GM12878 (cell line): ENCODE measurements at regions of chr14 and their contacts with region 1.

Region 1: DNA sequence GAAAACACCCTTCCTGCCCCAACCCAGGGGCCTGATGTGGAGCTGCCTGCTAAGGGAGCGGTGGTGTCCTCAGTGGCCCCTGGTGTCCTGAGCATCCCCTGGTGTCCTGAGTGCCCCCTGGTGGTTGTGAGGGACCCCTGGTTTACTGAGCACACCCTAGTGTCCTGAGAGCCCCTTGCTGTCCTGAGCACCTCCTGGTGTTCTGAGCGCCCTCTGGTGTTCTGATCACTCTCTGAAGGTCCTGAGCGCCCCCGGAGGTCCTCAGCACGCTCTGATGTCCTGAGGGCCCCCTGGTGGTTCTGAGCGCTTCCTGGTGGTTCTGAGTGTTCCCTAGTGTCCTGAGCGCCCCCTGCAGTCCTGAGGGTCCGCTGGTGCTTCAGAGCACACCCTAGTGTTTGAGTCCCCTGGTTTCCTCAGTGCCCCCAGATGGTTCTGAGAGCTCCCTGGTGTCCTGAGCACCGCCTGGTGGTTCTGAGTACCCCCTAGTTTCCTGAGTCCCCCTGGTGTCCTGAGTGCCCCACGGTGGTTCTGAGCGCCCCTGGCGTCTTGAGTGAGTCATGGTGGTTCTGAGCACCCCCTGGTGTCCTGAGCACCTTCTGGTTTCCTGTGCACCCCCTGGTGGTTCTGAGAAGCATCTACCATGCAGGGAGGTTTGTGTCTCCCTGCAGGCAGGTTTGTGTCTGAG is 1004.2 kb downstream of the TMEM121 start:
- DNase-seq: peak; percentile 51
- ATAC-seq: peak; percentile 97
- H3K4me3 ChIP-seq: no peak overlapping the region
- H3K27ac ChIP-seq: no peak overlapping the region
- H3K4me1 ChIP-seq: peaks cover 8% of the 10 kb centered on the region
- H3K27me3 ChIP-seq: no peaks in the 10 kb centered on the region
- CTCF ChIP-seq: peak; percentile 79 to 91 (median 88)
- EP300 ChIP-seq: no peak
- POLR2A ChIP-seq: no peak
- RAD21 ChIP-seq: peak; percentile 51; the same call in 1 of the 2 replicates

Region 2: DNA sequence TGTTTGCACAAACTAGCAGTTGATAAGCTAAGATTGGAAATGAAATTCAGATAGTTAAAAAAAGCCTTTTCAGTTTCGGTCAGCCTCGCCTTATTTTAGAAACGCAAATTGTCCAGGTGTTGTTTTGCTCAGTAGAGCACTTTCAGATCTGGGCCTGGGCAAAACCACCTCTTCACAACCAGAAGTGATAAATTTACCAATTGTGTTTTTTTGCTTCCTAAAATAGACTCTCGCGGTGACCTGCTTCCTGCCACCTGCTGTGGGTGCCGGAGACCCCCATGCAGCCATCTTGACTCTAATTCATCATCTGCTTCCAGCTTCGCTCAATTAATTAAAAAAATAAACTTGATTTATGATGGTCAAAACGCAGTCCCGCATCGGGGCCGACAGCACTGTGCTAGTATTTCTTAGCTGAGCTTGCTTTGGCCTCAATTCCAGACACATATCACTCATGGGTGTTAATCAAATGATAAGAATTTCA is 668.5 kb before region 1 on chr14:
- CTCF ChIA-PET with region 1: no interaction called
- POLR2A ChIA-PET with region 1: no interaction called
- RAD21 ChIA-PET with region 1: no interaction called
- SMC1A ChIA-PET with region 1: no interaction called
- in situ Hi-C with region 1: loop called (anchors 25 kb)
- intact Hi-C with region 1: no loop called
- DNase-seq: peak; percentile 88
- ATAC-seq: peak; percentile 41
- H3K4me3 ChIP-seq: peak overlapping the region; percentile 84
- H3K27ac ChIP-seq: peak overlapping the region; percentile 98
- H3K4me1 ChIP-seq: no peaks in the 10 kb centered on the region
- H3K27me3 ChIP-seq: no peaks in the 10 kb centered on the region
- CTCF ChIP-seq: no peak
- EP300 ChIP-seq: peak; percentile 99 to 100
- POLR2A ChIP-seq: no peak
- RAD21 ChIP-seq: no peak

Region 3: GRCh38 chr14:106442857-106443256 is 87.7 kb before region 1 on chr14:
- CTCF ChIA-PET with region 1: interaction called, 82 read pairs
- POLR2A ChIA-PET with region 1: no interaction called
- RAD21 ChIA-PET with region 1: no interaction called
- SMC1A ChIA-PET with region 1: interaction called, 19 read pairs
- in situ Hi-C with region 1: no loop called
- intact Hi-C with region 1: loop called (anchors 5 kb)
- DNase-seq: no peak
- ATAC-seq: peak; percentile 100
- H3K4me3 ChIP-seq: no peak overlapping the region
- H3K27ac ChIP-seq: no peak overlapping the region
- H3K4me1 ChIP-seq: no peaks in the 10 kb centered on the region
- H3K27me3 ChIP-seq: peaks cover 0 to 6% of the 10 kb centered on the region in 2 experiments; a peak in 2 of 4 replicates
- CTCF ChIP-seq: peak; percentile 56 to 76 (median 57)
- EP300 ChIP-seq: no peak
- POLR2A ChIP-seq: no peak
- RAD21 ChIP-seq: peak; percentile 31; the same call in 1 of the 2 replicates

Region 4: GRCh38 chr14:106491851-106492250 is 38.7 kb before region 1 on chr14:
- CTCF ChIA-PET with region 1: interaction called, 25 read pairs
- POLR2A ChIA-PET with region 1: no interaction called
- RAD21 ChIA-PET with region 1: interaction called, 3 read pairs
- SMC1A ChIA-PET with region 1: interaction called, 15 read pairs
- in situ Hi-C with region 1: no loop called
- intact Hi-C with region 1: no loop called
- DNase-seq: no peak
- ATAC-seq: no peak
- H3K4me3 ChIP-seq: no peak overlapping the region
- H3K27ac ChIP-seq: no peak overlapping the region
- H3K4me1 ChIP-seq: no peaks in the 10 kb centered on the region
- H3K27me3 ChIP-seq: peaks cover 0 to 4% of the 10 kb centered on the region in 2 experiments; a peak in 1 of 4 replicates
- CTCF ChIP-seq: peak; percentile 30 to 64 (median 58); a peak in 5 of 6 replicates
- EP300 ChIP-seq: no peak
- POLR2A ChIP-seq: no peak
- RAD21 ChIP-seq: peak; percentile 68

Region 5: GRCh38 chr14:106518054-106518943 is 12.3 kb before region 1 on chr14:
- CTCF ChIA-PET with region 1: interaction called, 132 read pairs
- POLR2A ChIA-PET with region 1: interaction called, 3 read pairs
- RAD21 ChIA-PET with region 1: interaction called, 25 read pairs
- SMC1A ChIA-PET with region 1: interaction called, 18 read pairs
- in situ Hi-C with region 1: no loop called
- intact Hi-C with region 1: no loop called
- DNase-seq: no peak
- ATAC-seq: peak; percentile 84
- H3K4me3 ChIP-seq: no peak overlapping the region
- H3K27ac ChIP-seq: no peak overlapping the region
- H3K4me1 ChIP-seq: peaks cover 10% of the 10 kb centered on the region
- H3K27me3 ChIP-seq: no peaks in the 10 kb centered on the region; a peak in 1 of 4 replicates
- CTCF ChIP-seq: peak; percentile 63 to 76 (median 75)
- EP300 ChIP-seq: no peak
- POLR2A ChIP-seq: no peak
- RAD21 ChIP-seq: peak; percentile 78

Region 6: DNA sequence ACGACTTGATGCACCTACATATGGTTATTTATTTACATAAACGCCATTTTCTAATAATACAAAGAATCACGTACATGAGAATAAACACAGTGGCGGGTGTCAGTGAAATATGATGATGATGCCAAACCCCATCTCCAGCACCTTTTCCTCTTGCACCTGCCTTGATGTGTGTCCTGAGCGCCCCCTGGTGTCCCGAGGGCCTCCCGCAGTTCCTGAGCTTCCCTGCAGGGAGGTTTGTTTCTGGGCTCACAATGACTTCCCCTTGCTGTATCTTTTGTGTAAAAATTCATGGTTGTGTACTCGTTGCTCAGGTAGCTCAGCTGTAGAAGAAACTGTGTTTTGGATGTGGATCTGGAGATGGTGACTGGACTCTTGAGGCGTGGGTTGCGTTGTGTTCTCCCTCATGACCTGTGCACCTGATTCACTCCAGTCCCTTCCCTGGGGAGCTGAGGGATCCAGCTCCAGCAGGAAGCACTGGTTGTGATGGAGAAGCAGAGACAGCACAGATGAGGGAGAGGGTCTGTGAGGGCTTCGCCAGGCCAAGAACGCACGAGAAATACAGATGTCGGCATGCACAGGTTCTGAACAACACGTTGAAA is 33.6 kb after region 1 on chr14:
- CTCF ChIA-PET with region 1: interaction called, 92 read pairs
- POLR2A ChIA-PET with region 1: no interaction called
- RAD21 ChIA-PET with region 1: interaction called, 4 read pairs
- SMC1A ChIA-PET with region 1: interaction called, 5 read pairs
- in situ Hi-C with region 1: no loop called
- intact Hi-C with region 1: no loop called
- DNase-seq: no peak
- ATAC-seq: peak; percentile 96
- H3K4me3 ChIP-seq: no peak overlapping the region
- H3K27ac ChIP-seq: no peak overlapping the region
- H3K4me1 ChIP-seq: no peaks in the 10 kb centered on the region
- H3K27me3 ChIP-seq: peaks cover 0 to 2% of the 10 kb centered on the region in 2 experiments; a peak in 2 of 4 replicates
- CTCF ChIP-seq: peak; percentile 85 to 96 (median 96)
- EP300 ChIP-seq: no peak
- POLR2A ChIP-seq: no peak
- RAD21 ChIP-seq: peak; percentile 69

Region 7: DNA sequence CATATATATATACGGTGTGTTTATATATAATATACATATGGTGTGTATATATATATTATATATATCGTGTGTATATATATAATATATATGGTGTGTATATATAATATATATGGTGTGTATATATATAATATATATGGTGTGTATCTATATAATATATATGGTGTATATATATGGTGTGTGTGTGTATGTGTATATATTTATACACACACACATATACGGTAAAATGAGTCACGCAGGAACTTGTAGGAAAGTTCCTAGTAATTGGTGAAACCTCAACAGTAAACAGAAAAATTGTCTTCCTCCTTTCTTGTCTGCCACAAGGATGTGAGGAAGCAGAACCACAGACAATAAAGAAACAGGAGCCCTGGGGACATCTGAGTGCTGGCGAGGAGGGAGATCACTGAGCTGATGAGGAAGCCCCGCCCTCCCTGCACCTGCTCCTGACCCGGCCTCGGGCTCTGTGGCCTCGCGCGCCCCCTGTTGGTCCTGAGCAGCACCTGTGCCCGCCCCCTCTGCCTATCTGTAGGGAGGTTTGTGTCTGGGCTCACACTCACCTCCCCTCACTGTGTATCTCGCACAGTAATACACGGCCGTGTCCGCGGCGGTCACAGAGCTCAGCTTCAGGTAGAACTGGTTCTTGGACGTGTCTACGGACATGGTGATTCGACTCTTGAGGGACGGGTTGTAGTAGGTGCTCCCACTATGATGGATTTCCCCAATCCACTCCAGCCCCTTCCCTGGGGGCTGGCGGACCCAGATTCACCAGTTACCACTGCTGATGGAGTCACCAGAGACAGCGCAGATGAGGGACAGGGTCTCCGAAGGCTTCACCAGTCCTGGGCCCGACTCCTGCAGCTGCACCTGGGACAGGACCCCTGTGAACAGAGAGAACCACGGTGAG is 75.2 kb after region 1 on chr14:
- CTCF ChIA-PET with region 1: interaction called, 13 read pairs
- POLR2A ChIA-PET with region 1: no interaction called
- RAD21 ChIA-PET with region 1: no interaction called
- SMC1A ChIA-PET with region 1: no interaction called
- in situ Hi-C with region 1: no loop called
- intact Hi-C with region 1: no loop called
- DNase-seq: peak; percentile 21
- ATAC-seq: peak; percentile 100
- H3K4me3 ChIP-seq: no peak overlapping the region
- H3K27ac ChIP-seq: no peak overlapping the region
- H3K4me1 ChIP-seq: no peaks in the 10 kb centered on the region
- H3K27me3 ChIP-seq: peaks cover 0 to 3% of the 10 kb centered on the region in 2 experiments; a peak in 1 of 4 replicates
- CTCF ChIP-seq: peak; percentile 69 to 91 (median 85)
- EP300 ChIP-seq: no peak
- POLR2A ChIP-seq: no peak
- RAD21 ChIP-seq: peak; percentile 55

Region 8: DNA sequence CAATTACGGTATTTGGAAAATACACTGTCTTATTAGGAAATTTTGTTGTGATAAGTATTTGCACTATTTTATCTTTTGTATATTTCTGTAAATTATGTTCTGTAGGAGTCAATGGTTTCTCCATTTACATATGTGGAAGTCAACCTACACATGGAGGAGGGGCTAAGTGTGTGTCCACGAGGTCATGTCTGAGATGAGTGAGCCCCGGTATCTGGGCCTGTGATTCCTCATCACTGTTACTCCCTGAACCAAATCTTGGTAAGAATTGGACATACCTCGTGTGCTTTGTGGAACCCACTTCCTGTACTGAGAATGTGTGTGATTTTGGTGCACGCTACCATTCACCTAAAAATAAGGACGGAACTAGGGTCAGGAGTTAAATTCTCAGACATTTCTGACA is 101.3 kb after region 1 on chr14:
- CTCF ChIA-PET with region 1: no interaction called
- POLR2A ChIA-PET with region 1: no interaction called
- RAD21 ChIA-PET with region 1: no interaction called
- SMC1A ChIA-PET with region 1: no interaction called
- in situ Hi-C with region 1: no loop called
- intact Hi-C with region 1: no loop called
- DNase-seq: no peak
- ATAC-seq: no peak
- H3K4me3 ChIP-seq: no peak overlapping the region
- H3K27ac ChIP-seq: no peak overlapping the region
- H3K4me1 ChIP-seq: no peaks in the 10 kb centered on the region
- H3K27me3 ChIP-seq: no peaks in the 10 kb centered on the region; a peak in 2 of 4 replicates
- CTCF ChIP-seq: no peak
- EP300 ChIP-seq: no peak
- POLR2A ChIP-seq: no peak
- RAD21 ChIP-seq: no peak

Region 9: DNA sequence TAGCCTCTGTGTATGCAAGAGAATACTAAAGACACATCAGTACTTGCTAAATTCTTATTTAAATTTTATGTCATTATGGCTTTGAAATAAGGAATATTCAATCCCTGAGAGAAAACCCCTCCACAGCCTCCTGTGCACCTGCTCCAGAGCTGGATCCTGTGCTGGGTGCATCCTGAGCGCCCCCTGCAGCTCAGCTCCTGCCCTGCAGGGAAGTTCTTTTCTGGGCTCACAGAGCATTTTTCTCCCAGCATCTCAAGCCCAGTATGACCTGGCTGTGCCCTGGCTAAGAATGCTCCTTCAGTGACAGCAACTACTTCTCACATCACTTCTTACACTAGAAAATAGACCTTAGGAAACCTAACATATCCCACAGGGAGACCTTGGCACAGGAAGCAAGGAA is 207.5 kb after region 1 on chr14:
- CTCF ChIA-PET with region 1: no interaction called
- POLR2A ChIA-PET with region 1: no interaction called
- RAD21 ChIA-PET with region 1: no interaction called
- SMC1A ChIA-PET with region 1: no interaction called
- in situ Hi-C with region 1: no loop called
- intact Hi-C with region 1: no loop called
- DNase-seq: no peak
- ATAC-seq: no peak
- H3K4me3 ChIP-seq: no peak overlapping the region
- H3K27ac ChIP-seq: no peak overlapping the region
- H3K4me1 ChIP-seq: no peaks in the 10 kb centered on the region
- H3K27me3 ChIP-seq: no peaks in the 10 kb centered on the region
- CTCF ChIP-seq: no peak
- EP300 ChIP-seq: no peak
- POLR2A ChIP-seq: no peak
- RAD21 ChIP-seq: no peak